ENCODE measurements at regions of chr15 and their contacts with region 1.

Region 1: GRCh38 chr15:48330855-48331795 is at the start of gene DUT:
- DNase-seq: peak; percentile 84
- H3K4me3 Mint-ChIP-seq: peak within 1 kb of the TSS; percentile 95
- H3K27ac Mint-ChIP-seq: peak within 1 kb of the TSS; percentile 97
- H3K4me1 Mint-ChIP-seq: peaks cover 37% of the 10 kb centered on the region
- H3K27me3 Mint-ChIP-seq: no peaks in the 10 kb centered on the region
- total RNA-seq, gene DUT: 605 to 628 TPM

Region 2: GRCh38 chr15:48177766-48178647 is 153.1 kb before region 1 on chr15 and contains the start of gene MYEF2:
- CTCF ChIA-PET with region 1: no interaction called
- intact Hi-C with region 1: loop called (anchors 1 kb)
- DNase-seq: peak; percentile 83
- H3K4me3 Mint-ChIP-seq: peak within 1 kb of the TSS; percentile 78
- H3K27ac Mint-ChIP-seq: peak within 1 kb of the TSS; percentile 85
- H3K4me1 Mint-ChIP-seq: peaks cover 14% of the 10 kb centered on the region
- H3K27me3 Mint-ChIP-seq: peaks cover 23% of the 10 kb centered on the region
- total RNA-seq, gene MYEF2: 31.7 to 32.7 TPM

Region 3: DNA sequence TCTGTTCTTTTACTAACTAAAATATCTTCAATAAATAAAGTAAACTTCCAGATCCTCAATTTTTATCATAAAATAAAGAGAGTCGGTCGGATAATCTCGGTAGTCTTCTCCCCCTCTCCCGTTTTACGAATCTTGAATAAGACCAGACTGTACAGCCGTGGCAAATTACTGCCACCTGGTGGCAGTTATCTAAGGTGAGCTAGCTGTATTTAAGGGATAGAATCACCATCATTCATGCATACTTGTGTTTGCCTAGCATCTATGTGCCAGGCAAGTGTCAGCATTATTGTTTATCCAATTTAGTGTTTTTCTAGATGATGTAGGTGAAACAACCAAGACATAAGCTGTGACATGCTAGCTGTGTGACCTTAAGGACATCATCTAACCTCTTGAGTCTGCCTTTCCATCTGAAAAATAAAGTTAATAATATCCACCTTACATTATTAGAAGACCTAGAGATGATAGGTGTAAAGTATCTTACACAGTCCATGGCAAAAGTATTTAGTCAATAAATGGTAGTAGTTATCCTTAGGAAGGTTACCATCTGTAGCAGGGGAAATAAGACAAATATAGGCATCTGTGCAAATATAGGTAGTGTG is 21.4 kb after region 1 on chr15:
- CTCF ChIA-PET with region 1: interaction called, 21 read pairs
- intact Hi-C with region 1: no loop called
- DNase-seq: peak; percentile 68
- H3K4me3 Mint-ChIP-seq: no peak overlapping the region
- H3K27ac Mint-ChIP-seq: no peak overlapping the region
- H3K4me1 Mint-ChIP-seq: peaks cover 2% of the 10 kb centered on the region
- H3K27me3 Mint-ChIP-seq: no peaks in the 10 kb centered on the region

Region 4: DNA sequence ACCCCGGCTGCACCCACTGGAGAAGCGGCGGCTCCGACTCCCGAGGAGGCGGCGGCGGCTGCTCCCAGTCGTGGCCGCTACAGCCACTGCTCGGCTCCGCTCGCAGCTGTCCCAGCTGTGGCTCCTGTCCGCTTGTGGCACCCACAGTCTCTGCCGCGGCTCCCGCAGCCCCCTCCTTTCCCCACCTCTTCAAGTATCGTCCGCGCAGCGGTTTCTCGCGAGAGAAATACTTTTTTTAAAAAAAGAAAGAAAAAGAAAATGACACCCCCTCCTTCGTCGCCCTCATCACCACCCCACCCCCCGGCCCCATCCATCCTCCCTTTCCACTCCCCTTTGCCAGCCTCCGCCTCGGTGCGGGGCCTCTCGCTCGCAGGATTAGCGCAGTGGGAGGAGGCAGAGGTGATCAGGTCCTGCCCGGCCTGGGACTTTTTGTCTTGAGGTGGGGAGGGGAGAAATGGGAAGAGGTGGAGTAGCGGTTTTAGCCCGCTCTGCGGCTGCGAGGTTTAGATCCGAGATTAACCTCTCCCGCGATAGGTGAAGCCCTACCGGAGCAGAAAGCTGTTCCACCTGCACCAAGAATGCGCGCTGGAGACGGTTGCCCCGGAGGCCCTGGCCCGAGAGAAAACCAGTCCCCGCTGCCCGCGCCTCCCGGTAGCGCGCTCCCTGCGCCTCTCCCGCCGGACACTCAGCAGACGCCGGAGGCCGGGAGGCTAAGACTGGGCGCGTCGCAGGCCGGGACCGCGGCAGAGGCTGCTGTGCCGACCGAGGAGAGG is 314.6 kb after region 1 on chr15 and contains the start of gene FBN1:
- CTCF ChIA-PET with region 1: no interaction called
- intact Hi-C with region 1: loop called (anchors 10 kb)
- DNase-seq: peak; percentile 39
- H3K4me3 Mint-ChIP-seq: peak within 1 kb of the TSS; percentile 49
- H3K27ac Mint-ChIP-seq: no peak within 1 kb of the TSS
- H3K4me1 Mint-ChIP-seq: peaks cover 6% of the 10 kb centered on the region
- H3K27me3 Mint-ChIP-seq: peaks cover 39% of the 10 kb centered on the region
- total RNA-seq, gene FBN1: 0.35 to 0.41 TPM

Region 5: GRCh38 chr15:48748535-48748934 is 417.4 kb after region 1 on chr15:
- CTCF ChIA-PET with region 1: no interaction called
- intact Hi-C with region 1: loop called (anchors 5 kb)
- DNase-seq: no peak
- H3K4me3 Mint-ChIP-seq: no peak overlapping the region
- H3K27ac Mint-ChIP-seq: no peak overlapping the region
- H3K4me1 Mint-ChIP-seq: no peaks in the 10 kb centered on the region
- H3K27me3 Mint-ChIP-seq: no peaks in the 10 kb centered on the region

Region 6: GRCh38 chr15:49155110-49155833 is 824.1 kb after region 1 on chr15 and contains the start of gene COPS2:
- CTCF ChIA-PET with region 1: no interaction called
- intact Hi-C with region 1: loop called (anchors 2 kb)
- DNase-seq: peak; percentile 97
- H3K4me3 Mint-ChIP-seq: peak within 1 kb of the TSS; percentile 98
- H3K27ac Mint-ChIP-seq: peak within 1 kb of the TSS; percentile 97
- H3K4me1 Mint-ChIP-seq: peaks cover 41% of the 10 kb centered on the region
- H3K27me3 Mint-ChIP-seq: no peaks in the 10 kb centered on the region
- total RNA-seq, gene COPS2: 79.7 to 86.4 TPM

Region 7: GRCh38 chr15:49620658-49621368 is 1289.7 kb after region 1 on chr15 and contains the starts of genes DTWD1 and FAM227B:
- CTCF ChIA-PET with region 1: no interaction called
- intact Hi-C with region 1: loop called (anchors 5 kb)
- DNase-seq: peak; percentile 96
- H3K4me3 Mint-ChIP-seq: peak within 1 kb of the TSS; percentile 88
- H3K27ac Mint-ChIP-seq: peak within 1 kb of the TSS; percentile 91
- H3K4me1 Mint-ChIP-seq: peaks cover 33% of the 10 kb centered on the region
- H3K27me3 Mint-ChIP-seq: no peaks in the 10 kb centered on the region
- total RNA-seq, gene DTWD1: 18.5 to 19.4 TPM
- total RNA-seq, gene FAM227B: 2.0 to 2.8 TPM

Measured in activated naive CD4-positive, alpha-beta T cell treated with anti-CD3 and anti-CD28 coated beads for 36 hours (primary cell).